PC-9 (cell line): ENCODE measurements at regions of chr12 and their contacts with region 1.

Region 1: DNA sequence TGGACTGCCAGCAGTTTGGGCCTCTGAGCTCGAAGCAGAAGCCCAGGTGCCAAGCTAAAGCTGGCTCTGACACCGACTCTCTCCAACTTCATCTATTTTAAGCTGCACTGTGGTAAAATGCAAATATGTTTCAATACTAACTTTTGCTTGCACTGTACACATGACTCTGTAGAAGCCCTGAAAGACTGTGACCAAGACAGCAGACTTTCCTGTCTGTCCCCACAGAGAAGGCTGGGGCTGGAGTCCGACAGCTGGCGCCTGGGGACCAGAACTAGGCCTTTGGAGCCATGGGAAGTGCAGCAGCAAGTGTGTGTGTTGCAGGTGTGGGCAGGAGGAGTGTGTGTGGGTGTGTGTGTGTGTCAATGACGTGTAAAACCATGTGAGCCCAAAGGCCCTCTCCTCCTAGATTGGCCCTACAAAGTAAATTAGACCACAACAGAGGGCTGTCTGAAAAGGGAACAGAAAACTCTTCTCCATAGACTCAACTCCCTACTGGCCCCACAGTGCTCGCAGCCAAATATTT is 16.4 kb upstream of the RAB35 start:
- DNase-seq: no peak
- H3K4me3 ChIP-seq: no peak overlapping the region
- H3K27ac ChIP-seq: no peak overlapping the region
- H3K4me1 ChIP-seq: no peaks in the 10 kb centered on the region
- H3K27me3 ChIP-seq: no peaks in the 10 kb centered on the region
- CTCF ChIP-seq: no peak

Region 2: GRCh38 chr12:119704065-119704747 is 428.7 kb before region 1 on chr12:
- CTCF ChIA-PET with region 1: no interaction called
- POLR2A ChIA-PET with region 1: no interaction called
- intact Hi-C with region 1: no loop called
- DNase-seq: no peak
- H3K4me3 ChIP-seq: no peak overlapping the region
- H3K27ac ChIP-seq: no peak overlapping the region
- H3K4me1 ChIP-seq: no peaks in the 10 kb centered on the region
- H3K27me3 ChIP-seq: no peaks in the 10 kb centered on the region
- CTCF ChIP-seq: no peak

Region 3: DNA sequence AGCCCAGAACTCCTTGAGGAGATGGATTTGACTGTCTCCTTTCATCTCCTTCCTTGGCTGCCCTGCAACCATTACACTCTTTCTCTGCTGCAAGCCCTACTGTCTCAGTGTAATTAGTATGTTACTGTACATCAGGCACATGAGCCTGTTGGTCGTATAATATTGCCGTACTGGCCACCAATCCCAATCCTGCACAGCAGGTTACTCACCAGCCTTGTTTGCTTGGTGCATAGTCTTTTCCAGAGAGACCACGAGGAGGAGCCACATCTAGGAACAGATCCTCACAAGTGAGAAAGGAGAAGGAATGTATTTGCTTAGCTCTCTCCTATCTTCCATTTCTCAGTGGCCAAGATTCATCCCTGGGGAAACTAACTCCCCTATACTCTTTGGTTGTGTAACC is 176.9 kb before region 1 on chr12:
- CTCF ChIA-PET with region 1: no interaction called
- POLR2A ChIA-PET with region 1: no interaction called
- intact Hi-C with region 1: no loop called
- DNase-seq: no peak
- H3K4me3 ChIP-seq: no peak overlapping the region
- H3K27ac ChIP-seq: no peak overlapping the region
- H3K4me1 ChIP-seq: no peaks in the 10 kb centered on the region
- H3K27me3 ChIP-seq: no peaks in the 10 kb centered on the region
- CTCF ChIP-seq: no peak

Region 4: GRCh38 chr12:120116792-120117651 is 15.9 kb before region 1 on chr12:
- CTCF ChIA-PET with region 1: no interaction called
- POLR2A ChIA-PET with region 1: no interaction called
- intact Hi-C with region 1: no loop called
- DNase-seq: peak; percentile 70 to 98
- H3K4me3 ChIP-seq: peak overlapping the region; percentile 85
- H3K27ac ChIP-seq: peak overlapping the region; percentile 69
- H3K4me1 ChIP-seq: peaks cover 28% of the 10 kb centered on the region
- H3K27me3 ChIP-seq: no peaks in the 10 kb centered on the region
- CTCF ChIP-seq: no peak

Region 5: GRCh38 chr12:120181991-120182631 is 49.2 kb after region 1 on chr12:
- CTCF ChIA-PET with region 1: no interaction called
- POLR2A ChIA-PET with region 1: no interaction called
- intact Hi-C with region 1: no loop called
- DNase-seq: peak; percentile 61 to 88
- H3K4me3 ChIP-seq: no peak overlapping the region
- H3K27ac ChIP-seq: peak overlapping the region; percentile 84
- H3K4me1 ChIP-seq: peaks cover 27% of the 10 kb centered on the region
- H3K27me3 ChIP-seq: no peaks in the 10 kb centered on the region
- CTCF ChIP-seq: no peak

Region 6: DNA sequence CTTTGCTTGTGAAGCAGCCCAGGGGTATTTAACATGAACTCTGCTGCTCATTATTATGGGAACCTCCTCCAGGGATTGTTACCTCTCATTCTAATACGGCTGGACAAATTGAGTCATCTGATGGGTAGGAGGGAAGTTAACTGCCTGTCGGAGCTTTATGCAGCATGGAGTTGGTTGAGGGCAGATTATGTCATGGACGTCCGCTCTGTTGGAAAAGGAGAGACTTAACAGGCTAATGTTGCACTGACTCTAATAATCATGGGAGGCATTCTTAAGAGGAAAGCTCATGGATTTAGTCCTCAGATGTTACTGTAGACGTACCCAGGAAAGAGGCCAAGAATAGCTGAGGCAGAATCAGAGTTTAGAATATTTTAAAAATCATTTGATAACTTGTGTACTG is 438.4 kb after region 1 on chr12:
- CTCF ChIA-PET with region 1: no interaction called
- POLR2A ChIA-PET with region 1: interaction called, 17 read pairs
- intact Hi-C with region 1: no loop called
- DNase-seq: no peak
- H3K4me3 ChIP-seq: no peak overlapping the region
- H3K27ac ChIP-seq: no peak overlapping the region
- H3K4me1 ChIP-seq: no peaks in the 10 kb centered on the region
- H3K27me3 ChIP-seq: no peaks in the 10 kb centered on the region
- CTCF ChIP-seq: no peak